ENCODE measurements at regions of chr11 and their contacts with region 1.

Region 1: GRCh38 chr11:102495161-102496042 is 35.1 kb downstream of the MMP7 start:
- DNase-seq: peak; percentile 51
- ATAC-seq: peak; percentile 68
- H3K4me3 Mint-ChIP-seq: no peak overlapping the region
- H3K27ac Mint-ChIP-seq: peak overlapping the region; percentile 14
- H3K4me1 Mint-ChIP-seq: peaks cover 23% of the 10 kb centered on the region
- H3K27me3 Mint-ChIP-seq: peaks cover 1% of the 10 kb centered on the region
- CTCF ChIP-seq: peak; percentile 92

Region 2: DNA sequence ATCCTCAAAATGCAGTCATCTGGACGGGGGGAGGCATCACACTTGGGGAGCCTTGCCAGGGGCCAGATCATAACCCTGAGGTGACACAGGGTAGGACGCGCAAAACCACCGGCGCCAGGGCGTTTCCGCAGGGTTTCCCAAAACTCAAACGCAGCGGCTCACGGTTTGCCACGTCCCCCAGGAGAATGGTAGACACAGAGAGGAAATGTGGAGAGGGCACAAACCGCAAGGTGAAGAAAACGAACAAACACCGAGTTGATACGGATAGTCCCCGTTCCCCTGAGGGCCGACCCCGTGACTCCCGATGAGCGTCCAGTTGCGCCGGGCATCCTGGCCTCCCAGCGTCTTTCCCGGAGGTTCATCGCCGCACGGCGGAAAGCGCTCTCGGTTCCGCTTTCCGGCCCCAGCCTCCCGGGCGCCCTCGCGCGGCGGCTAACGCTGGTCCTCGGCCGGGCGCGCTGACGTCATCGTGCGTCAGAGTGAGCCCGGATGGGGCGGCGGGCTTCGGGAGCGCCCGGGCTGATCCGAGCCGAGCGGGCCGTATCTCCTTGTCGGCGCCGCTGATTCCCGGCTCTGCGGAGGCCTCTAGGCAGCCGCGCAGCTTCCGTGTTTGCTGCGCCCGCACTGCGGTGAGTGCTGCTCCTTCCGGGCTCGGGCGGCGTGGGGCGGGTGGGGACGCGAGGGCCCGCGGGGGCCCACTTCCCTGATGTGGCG is 148.5 kb before region 1 on chr11 and contains the start of gene BIRC2:
- CTCF ChIA-PET with region 1: interaction called, 63 read pairs
- POLR2A ChIA-PET with region 1: interaction called, 3 read pairs
- intact Hi-C with region 1: no loop called
- DNase-seq: peak; percentile 95
- ATAC-seq: peak; percentile 94
- H3K4me3 Mint-ChIP-seq: peak within 1 kb of the TSS; percentile 90
- H3K27ac Mint-ChIP-seq: peak within 1 kb of the TSS; percentile 95
- H3K4me1 Mint-ChIP-seq: peaks cover 36% of the 10 kb centered on the region
- H3K27me3 Mint-ChIP-seq: no peaks in the 10 kb centered on the region
- CTCF ChIP-seq: peak; percentile 69
- total RNA-seq, gene BIRC2: 29.8 to 32.9 TPM

Region 3: GRCh38 chr11:102396708-102397563 is 98.5 kb before region 1 on chr11:
- CTCF ChIA-PET with region 1: interaction called, 49 read pairs
- POLR2A ChIA-PET with region 1: interaction called, 4 read pairs
- intact Hi-C with region 1: no loop called
- DNase-seq: no peak
- ATAC-seq: peak; percentile 63
- H3K4me3 Mint-ChIP-seq: no peak overlapping the region
- H3K27ac Mint-ChIP-seq: peak overlapping the region; percentile 79
- H3K4me1 Mint-ChIP-seq: peaks cover 44% of the 10 kb centered on the region
- H3K27me3 Mint-ChIP-seq: no peaks in the 10 kb centered on the region
- CTCF ChIP-seq: no peak

Region 4: DNA sequence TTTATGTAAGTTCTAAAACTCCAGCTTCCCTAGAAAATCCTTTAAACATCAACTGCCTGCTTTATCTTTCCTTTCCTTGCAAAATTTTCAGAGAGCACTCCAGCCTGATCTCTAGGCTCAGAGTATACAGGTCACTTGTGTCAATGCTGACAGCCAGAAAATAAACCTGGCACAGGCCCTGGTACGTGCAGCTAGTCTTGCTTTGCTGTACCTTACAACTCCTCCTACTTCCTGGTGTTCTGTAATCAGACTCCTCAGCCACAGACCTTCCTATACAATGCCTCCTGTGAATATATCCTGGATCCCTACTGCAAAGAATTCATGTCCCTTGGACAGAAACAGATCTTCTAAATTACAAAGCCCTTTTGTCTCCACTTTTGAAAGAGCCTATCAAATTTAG is 18.6 kb before region 1 on chr11:
- CTCF ChIA-PET with region 1: interaction called, 11 read pairs
- POLR2A ChIA-PET with region 1: no interaction called
- intact Hi-C with region 1: no loop called
- DNase-seq: peak; percentile 71
- ATAC-seq: peak; percentile 75
- H3K4me3 Mint-ChIP-seq: peak overlapping the region; percentile 53
- H3K27ac Mint-ChIP-seq: peak overlapping the region; percentile 90
- H3K4me1 Mint-ChIP-seq: peaks cover 61% of the 10 kb centered on the region
- H3K27me3 Mint-ChIP-seq: no peaks in the 10 kb centered on the region
- CTCF ChIP-seq: no peak

Region 5: DNA sequence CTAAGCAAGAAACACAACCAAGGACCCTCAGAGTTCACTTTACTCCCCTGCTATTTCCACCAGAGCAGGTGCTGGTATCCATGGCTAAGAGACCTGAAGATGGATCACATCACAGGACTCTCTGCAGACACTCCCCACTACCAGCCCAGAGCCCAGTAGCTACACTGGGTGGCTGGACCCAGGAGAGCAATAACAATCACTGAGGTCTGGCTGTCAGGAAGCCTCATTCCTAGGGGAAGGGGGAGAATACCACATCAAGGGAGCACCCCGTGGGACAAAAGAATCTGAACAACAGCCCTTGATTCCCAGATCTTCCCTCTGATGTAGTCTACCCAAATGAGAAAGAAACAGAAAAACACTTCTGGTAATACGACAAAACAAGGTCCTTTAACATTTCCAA is 44.2 kb after region 1 on chr11:
- CTCF ChIA-PET with region 1: no interaction called
- POLR2A ChIA-PET with region 1: no interaction called
- intact Hi-C with region 1: no loop called
- DNase-seq: no peak
- ATAC-seq: no peak
- H3K4me3 Mint-ChIP-seq: no peak overlapping the region
- H3K27ac Mint-ChIP-seq: no peak overlapping the region
- H3K4me1 Mint-ChIP-seq: no peaks in the 10 kb centered on the region
- H3K27me3 Mint-ChIP-seq: peaks cover 3% of the 10 kb centered on the region
- CTCF ChIP-seq: no peak

Region 6: GRCh38 chr11:102666331-102666957 is 171.0 kb after region 1 on chr11:
- CTCF ChIA-PET with region 1: interaction called, 15 read pairs
- POLR2A ChIA-PET with region 1: no interaction called
- intact Hi-C with region 1: no loop called
- DNase-seq: peak; percentile 23
- ATAC-seq: no peak
- H3K4me3 Mint-ChIP-seq: no peak overlapping the region
- H3K27ac Mint-ChIP-seq: no peak overlapping the region
- H3K4me1 Mint-ChIP-seq: no peaks in the 10 kb centered on the region
- H3K27me3 Mint-ChIP-seq: peaks cover 2% of the 10 kb centered on the region
- CTCF ChIP-seq: peak; percentile 78